Naive thymus-derived CD4-positive, alpha-beta T cell (primary cell): ENCODE measurements at regions of chr1 and their contacts with region 1.

Region 1: DNA sequence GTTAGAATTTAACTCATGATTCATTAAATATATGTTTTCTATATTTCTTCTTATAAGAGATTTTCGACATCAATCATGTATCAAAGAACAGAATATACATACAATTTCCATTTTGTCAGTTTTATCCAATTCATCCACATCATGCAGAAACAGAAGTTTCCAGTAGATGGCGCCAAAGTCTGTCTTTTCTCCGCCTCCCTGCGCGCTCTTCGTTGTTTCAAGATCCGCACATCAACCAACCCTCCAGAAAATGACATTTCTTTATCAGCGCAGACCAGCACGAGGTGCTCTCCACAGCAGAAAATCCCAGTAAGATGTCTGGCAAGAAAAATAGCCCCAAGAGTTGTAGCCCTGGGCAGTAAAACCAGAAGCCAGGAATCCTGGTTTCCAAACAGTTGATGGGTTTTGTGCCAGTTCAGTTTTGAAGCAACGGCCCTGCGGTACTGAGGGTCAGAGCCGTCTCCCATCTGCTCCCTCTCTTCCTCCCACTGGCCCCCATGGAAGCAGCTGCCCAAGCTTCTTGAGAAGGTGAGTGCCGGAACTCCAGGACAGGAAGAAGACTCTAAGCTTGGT is 38.6 kb upstream of the GPR137B start:
- DNase-seq: peak; percentile 26 to 69 (median 51)
- ATAC-seq: peak; percentile 74
- H3K4me3 ChIP-seq: no peak overlapping the region
- H3K4me3 Mint-ChIP-seq: peak overlapping the region in 1 of 10 donors; percentile 12
- H3K27ac ChIP-seq: no peak overlapping the region
- H3K27ac Mint-ChIP-seq: no peak overlapping the region
- H3K4me1 ChIP-seq: no peaks in the 10 kb centered on the region
- H3K4me1 Mint-ChIP-seq: peaks cover 0 to 9% (median 3%) of the 10 kb centered on the region in 7 donors
- H3K27me3 ChIP-seq: no peaks in the 10 kb centered on the region
- H3K27me3 Mint-ChIP-seq: peaks cover 0 to 4% (median 0%) of the 10 kb centered on the region in 5 donors

Region 2: DNA sequence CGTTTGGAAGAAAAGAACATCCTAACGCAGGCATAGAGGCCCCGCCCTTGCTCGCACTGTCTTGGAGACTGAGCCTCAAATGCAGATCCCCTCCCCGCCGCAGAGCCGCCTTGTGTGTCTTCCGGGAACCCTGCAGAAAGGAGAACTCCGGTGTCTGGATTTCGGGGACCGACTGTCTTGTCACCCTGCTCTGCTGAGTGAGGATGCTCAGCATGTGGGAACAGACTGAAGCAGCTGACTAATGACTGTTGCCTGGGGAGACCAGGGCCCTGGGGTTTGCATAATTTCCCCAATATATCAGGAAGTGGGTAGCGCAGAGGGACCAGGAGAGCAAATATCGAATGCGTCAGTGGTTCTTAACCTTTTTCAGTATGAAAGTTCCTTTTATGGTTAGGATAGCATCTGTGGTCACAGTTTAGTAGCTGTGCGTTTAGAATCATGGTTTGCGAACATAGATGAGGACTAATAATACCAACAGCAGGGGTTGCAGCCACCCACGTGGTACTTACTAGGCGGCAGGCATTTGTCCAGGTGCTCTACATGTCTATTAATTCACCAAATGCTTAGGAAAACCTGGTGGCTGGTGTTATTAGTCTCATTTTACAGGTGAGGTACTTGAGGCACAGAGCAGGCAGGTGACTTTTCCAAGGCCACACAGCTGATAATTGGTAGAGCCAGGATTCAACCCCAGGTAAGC is 52.9 kb after region 1 on chr1:
- CTCF ChIA-PET with region 1: no interaction called
- POLR2A ChIA-PET with region 1: no interaction called
- intact Hi-C with region 1: no loop called
- DNase-seq: no peak
- ATAC-seq: peak; percentile 90
- H3K4me3 ChIP-seq: no peak overlapping the region
- H3K4me3 Mint-ChIP-seq: no peak overlapping the region
- H3K27ac ChIP-seq: no peak overlapping the region
- H3K27ac Mint-ChIP-seq: no peak overlapping the region
- H3K4me1 ChIP-seq: peaks cover 0 to 20% of the 10 kb centered on the region in 2 donors
- H3K4me1 Mint-ChIP-seq: peaks cover 0 to 24% (median 0%) of the 10 kb centered on the region in 7 donors
- H3K27me3 ChIP-seq: no peaks in the 10 kb centered on the region
- H3K27me3 Mint-ChIP-seq: no peaks in the 10 kb centered on the region

Region 3: GRCh38 chr1:236489710-236490377 is 386.1 kb after region 1 on chr1:
- CTCF ChIA-PET with region 1: interaction called, 9 read pairs
- POLR2A ChIA-PET with region 1: no interaction called
- intact Hi-C with region 1: loop called in 1 of 2 experiments (anchors 1 kb)
- DNase-seq: peak in 6 of 9 donors; percentile 12 to 45 (median 32)
- ATAC-seq: peak; percentile 69
- H3K4me3 ChIP-seq: no peak overlapping the region
- H3K4me3 Mint-ChIP-seq: no peak overlapping the region
- H3K27ac ChIP-seq: no peak overlapping the region
- H3K27ac Mint-ChIP-seq: no peak overlapping the region
- H3K4me1 ChIP-seq: no peaks in the 10 kb centered on the region
- H3K4me1 Mint-ChIP-seq: peaks cover 5 to 15% (median 7%) of the 10 kb centered on the region in 7 donors
- H3K27me3 ChIP-seq: no peaks in the 10 kb centered on the region
- H3K27me3 Mint-ChIP-seq: peaks cover 0 to 26% (median 18%) of the 10 kb centered on the region in 5 donors

Region 4: DNA sequence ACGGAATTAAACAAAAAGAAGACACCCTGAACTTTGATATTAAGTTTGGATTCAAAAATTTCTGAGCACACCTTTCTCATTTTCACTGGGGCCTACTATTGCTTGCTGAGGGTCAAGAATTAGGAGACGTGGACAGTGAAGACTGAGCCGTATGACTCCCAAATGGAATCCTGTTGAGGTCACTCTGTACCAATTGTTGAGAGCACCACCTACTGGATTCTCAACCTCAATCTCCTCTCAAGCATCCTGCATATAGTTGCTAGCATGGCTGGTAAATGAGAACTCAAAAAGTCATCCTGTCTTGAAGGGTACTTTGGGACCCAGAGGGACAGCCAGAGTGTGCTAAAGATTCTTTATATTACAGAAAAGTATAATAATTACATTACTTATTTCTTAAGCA is 671.2 kb after region 1 on chr1:
- CTCF ChIA-PET with region 1: no interaction called
- POLR2A ChIA-PET with region 1: no interaction called
- intact Hi-C with region 1: loop called in 1 of 2 experiments (anchors 1 kb)
- DNase-seq: no peak
- ATAC-seq: no peak
- H3K4me3 ChIP-seq: no peak overlapping the region
- H3K4me3 Mint-ChIP-seq: no peak overlapping the region
- H3K27ac ChIP-seq: no peak overlapping the region
- H3K27ac Mint-ChIP-seq: no peak overlapping the region
- H3K4me1 ChIP-seq: no peaks in the 10 kb centered on the region
- H3K4me1 Mint-ChIP-seq: no peaks in the 10 kb centered on the region
- H3K27me3 ChIP-seq: no peaks in the 10 kb centered on the region
- H3K27me3 Mint-ChIP-seq: peaks cover 20 to 41% (median 34%) of the 10 kb centered on the region in 5 donors

Region 5: GRCh38 chr1:237124856-237125462 is 1021.2 kb after region 1 on chr1:
- CTCF ChIA-PET with region 1: no interaction called
- POLR2A ChIA-PET with region 1: no interaction called
- intact Hi-C with region 1: loop called (anchors 10 kb)
- DNase-seq: no peak
- ATAC-seq: no peak
- H3K4me3 ChIP-seq: no peak overlapping the region
- H3K4me3 Mint-ChIP-seq: no peak overlapping the region
- H3K27ac ChIP-seq: no peak overlapping the region
- H3K27ac Mint-ChIP-seq: no peak overlapping the region
- H3K4me1 ChIP-seq: no peaks in the 10 kb centered on the region
- H3K4me1 Mint-ChIP-seq: no peaks in the 10 kb centered on the region
- H3K27me3 ChIP-seq: no peaks in the 10 kb centered on the region
- H3K27me3 Mint-ChIP-seq: peaks cover 0 to 4% (median 0%) of the 10 kb centered on the region in 5 donors

Region 6: DNA sequence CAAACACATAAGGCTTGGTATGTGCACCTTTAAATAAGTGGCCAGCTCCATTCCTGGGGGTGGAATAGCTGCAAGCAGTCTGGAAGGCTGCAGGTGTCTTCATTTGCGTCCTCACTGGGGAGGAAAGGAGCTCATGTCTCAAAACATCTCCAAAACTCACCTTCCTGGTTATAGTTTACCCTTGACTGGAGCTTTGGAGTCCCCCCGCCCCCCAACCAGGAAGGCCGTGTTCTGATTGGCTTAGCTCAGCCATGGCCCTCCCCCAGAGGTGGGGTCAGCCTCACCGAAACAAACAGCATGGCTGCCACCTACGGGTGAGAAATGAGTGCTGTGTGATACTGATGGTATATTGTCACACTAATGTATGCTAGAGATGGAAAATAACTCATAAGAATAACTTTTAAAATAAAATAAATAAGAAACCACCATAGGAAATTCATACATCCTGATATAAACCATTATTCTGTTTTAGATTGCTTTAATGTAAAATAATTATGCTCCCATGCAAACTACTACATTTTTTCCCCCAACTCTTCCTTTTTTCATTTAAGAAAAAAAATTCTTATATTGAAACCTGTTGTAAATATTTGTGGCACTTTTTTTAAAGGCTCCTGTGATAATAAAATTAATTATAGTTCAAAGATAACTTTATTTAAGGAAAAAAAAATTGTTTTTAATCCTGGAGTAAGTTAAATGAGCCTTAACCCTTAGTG is 1696.2 kb after region 1 on chr1:
- CTCF ChIA-PET with region 1: no interaction called
- POLR2A ChIA-PET with region 1: no interaction called
- intact Hi-C with region 1: loop called in 1 of 2 experiments (anchors 10 kb)
- DNase-seq: peak in 1 of 9 donors; percentile 3
- ATAC-seq: peak; percentile 66
- H3K4me3 ChIP-seq: no peak overlapping the region
- H3K4me3 Mint-ChIP-seq: no peak overlapping the region
- H3K27ac ChIP-seq: no peak overlapping the region
- H3K27ac Mint-ChIP-seq: no peak overlapping the region
- H3K4me1 ChIP-seq: no peaks in the 10 kb centered on the region
- H3K4me1 Mint-ChIP-seq: no peaks in the 10 kb centered on the region
- H3K27me3 ChIP-seq: no peaks in the 10 kb centered on the region
- H3K27me3 Mint-ChIP-seq: peaks cover 0 to 8% (median 5%) of the 10 kb centered on the region in 5 donors